ENCODE measurements at regions of chr9 and their contacts with region 1.

Region 1: GRCh38 chr9:89309608-89310474 is 1.2 kb upstream of the CKS2 start:
- DNase-seq: peak in 2 of 42 donors; percentile 10 to 50

Region 2: GRCh38 chr9:88706193-88707118 is 603.4 kb before region 1 on chr9:
- intact Hi-C with region 1: no loop called
- DNase-seq: peak in 4 of 42 donors; percentile 16 to 52 (median 40)

Region 3: DNA sequence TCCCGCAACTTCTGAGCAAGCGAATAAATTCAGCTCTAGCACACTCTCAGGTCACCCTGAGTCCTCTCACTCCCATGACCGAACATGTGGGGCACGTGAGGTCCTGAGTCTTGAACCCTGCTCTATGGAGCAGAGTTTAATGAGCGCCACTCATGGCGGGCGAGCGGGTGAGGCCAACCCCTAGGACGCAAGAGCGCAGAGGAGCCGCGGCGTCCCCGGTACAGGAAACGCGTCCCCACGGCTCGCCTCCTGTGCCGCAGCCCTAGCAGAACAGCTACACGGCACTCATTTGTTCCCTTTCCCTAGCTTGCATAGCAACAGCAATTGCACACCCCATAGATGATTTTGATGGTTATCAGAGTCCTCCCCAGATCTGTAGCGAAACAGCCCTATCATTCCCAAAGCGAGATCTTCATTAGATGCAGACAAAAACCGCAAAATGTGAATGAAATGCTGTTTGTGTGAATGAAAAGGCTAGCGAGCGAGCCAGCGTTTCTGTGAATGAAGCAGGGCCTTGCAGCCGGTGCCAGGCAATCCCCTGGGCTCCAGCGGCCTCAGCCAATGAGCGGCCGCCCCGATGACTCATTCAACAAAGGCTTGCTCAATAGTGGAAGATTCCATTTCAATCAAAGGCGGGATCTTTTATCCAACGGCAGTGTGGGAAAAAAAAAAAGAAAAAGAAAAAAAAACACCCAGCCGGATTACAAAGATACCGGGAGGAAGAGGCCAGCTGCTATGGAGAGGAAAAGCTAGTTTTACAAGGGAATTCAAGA is 129.8 kb before region 1 on chr9:
- intact Hi-C with region 1: loop called (anchors 10 kb)
- DNase-seq: peak; percentile 85 to 98 (median 94)

Measured in head of caudate nucleus (tissue), 42 donors.